CD4-positive, alpha-beta T cell (primary cell): ENCODE measurements at regions of chr3 and their contacts with region 1.

Region 1: GRCh38 chr3:101854621-101855304 is 5.4 kb downstream of the NFKBIZ start:
- DNase-seq: no peak
- ATAC-seq: no peak
- H3K4me3 ChIP-seq: no peak overlapping the region
- H3K4me3 Mint-ChIP-seq: no peak overlapping the region
- H3K27ac ChIP-seq: no peak overlapping the region
- H3K27ac Mint-ChIP-seq: peak overlapping the region; percentile 100
- H3K4me1 ChIP-seq: peaks cover 27% of the 10 kb centered on the region
- H3K4me1 Mint-ChIP-seq: peaks cover 86% of the 10 kb centered on the region
- H3K27me3 ChIP-seq: no peaks in the 10 kb centered on the region
- H3K27me3 Mint-ChIP-seq: peaks cover 5% of the 10 kb centered on the region
- CTCF ChIP-seq: no peak

Region 2: GRCh38 chr3:101819758-101820157 is 35.0 kb before region 1 on chr3:
- CTCF ChIA-PET with region 1: interaction called, 6 read pairs
- POLR2A ChIA-PET with region 1: interaction called, 44 read pairs
- intact Hi-C with region 1: loop called (anchors 5 kb)
- DNase-seq: peak in 2 of 14 experiments; percentile 43 to 53
- ATAC-seq: no peak
- H3K4me3 ChIP-seq: no peak overlapping the region
- H3K4me3 Mint-ChIP-seq: no peak overlapping the region
- H3K27ac ChIP-seq: no peak overlapping the region
- H3K27ac Mint-ChIP-seq: no peak overlapping the region
- H3K4me1 ChIP-seq: peaks cover under 1% of the 10 kb centered on the region
- H3K4me1 Mint-ChIP-seq: peaks cover 30% of the 10 kb centered on the region
- H3K27me3 ChIP-seq: no peaks in the 10 kb centered on the region
- H3K27me3 Mint-ChIP-seq: no peaks in the 10 kb centered on the region
- CTCF ChIP-seq: no peak

Region 3: DNA sequence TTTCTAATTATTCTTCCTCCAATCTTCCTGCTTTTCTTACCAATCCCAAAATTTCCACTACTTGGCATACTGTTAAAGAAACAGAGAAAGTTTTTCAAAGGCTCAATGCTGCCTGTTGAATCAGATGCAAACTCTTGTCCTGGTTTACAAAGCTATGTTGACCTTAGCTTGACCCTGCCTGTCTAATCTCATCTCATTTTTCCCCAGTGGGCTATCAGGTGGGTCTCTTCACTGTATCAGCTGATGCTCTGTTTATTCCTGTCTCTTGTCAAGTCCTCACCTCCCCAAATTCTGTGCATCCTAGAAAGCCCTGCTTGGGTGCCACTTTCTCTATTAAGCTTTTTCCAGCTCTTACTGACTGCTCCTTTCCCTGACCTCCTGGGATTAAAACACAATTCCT is 12.7 kb after region 1 on chr3:
- CTCF ChIA-PET with region 1: interaction called, 4 read pairs
- POLR2A ChIA-PET with region 1: interaction called, 10 read pairs
- intact Hi-C with region 1: no loop called
- DNase-seq: no peak
- ATAC-seq: no peak
- H3K4me3 ChIP-seq: no peak overlapping the region
- H3K4me3 Mint-ChIP-seq: no peak overlapping the region
- H3K27ac ChIP-seq: no peak overlapping the region
- H3K27ac Mint-ChIP-seq: no peak overlapping the region
- H3K4me1 ChIP-seq: no peaks in the 10 kb centered on the region
- H3K4me1 Mint-ChIP-seq: no peaks in the 10 kb centered on the region
- H3K27me3 ChIP-seq: no peaks in the 10 kb centered on the region
- H3K27me3 Mint-ChIP-seq: no peaks in the 10 kb centered on the region
- CTCF ChIP-seq: no peak